Mammary epithelial cell (primary cell): ENCODE measurements at regions of chr10 and their contacts with region 1.

Region 1: GRCh38 chr10:125982260-125982948 is 86.0 kb downstream of the FANK1 start:
- DNase-seq: peak; percentile 52
- H3K4me3 ChIP-seq: no peak overlapping the region
- H3K27ac ChIP-seq: no peak overlapping the region
- H3K4me1 ChIP-seq: no peaks in the 10 kb centered on the region
- H3K27me3 ChIP-seq: no peaks in the 10 kb centered on the region
- CTCF ChIP-seq: peak; percentile 56 to 59

Region 2: GRCh38 chr10:125936331-125936730 is 46.1 kb before region 1 on chr10:
- CTCF ChIA-PET with region 1: no interaction called
- dilution Hi-C with region 1: no loop called
- in situ Hi-C with region 1: no loop called
- intact Hi-C with region 1: loop called (anchors 1 kb)
- DNase-seq: no peak
- H3K4me3 ChIP-seq: no peak overlapping the region
- H3K27ac ChIP-seq: no peak overlapping the region
- H3K4me1 ChIP-seq: peaks cover 7% of the 10 kb centered on the region
- H3K27me3 ChIP-seq: no peaks in the 10 kb centered on the region
- CTCF ChIP-seq: no peak

Region 3: DNA sequence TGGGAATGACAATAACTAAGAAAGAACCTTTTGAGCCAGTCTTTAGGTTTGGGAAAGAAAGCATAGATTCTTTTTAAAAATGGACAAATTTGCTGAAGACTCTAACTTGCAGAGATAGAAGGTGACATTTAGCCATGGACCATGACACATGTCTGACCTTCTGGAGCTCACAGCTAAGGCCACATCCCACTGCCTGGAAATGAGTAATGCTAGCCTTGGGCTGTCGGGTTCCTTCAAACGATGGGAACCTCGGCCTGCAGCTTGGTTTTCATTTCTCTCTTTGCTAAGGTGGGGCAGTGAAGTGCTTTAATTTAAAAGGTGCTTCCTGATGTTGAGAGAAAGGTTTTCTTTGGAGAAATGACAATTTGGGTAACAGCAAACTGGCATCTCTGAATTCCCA is 137.2 kb after region 1 on chr10:
- CTCF ChIA-PET with region 1: no interaction called
- dilution Hi-C with region 1: no loop called
- in situ Hi-C with region 1: no loop called
- intact Hi-C with region 1: no loop called
- DNase-seq: no peak
- H3K4me3 ChIP-seq: no peak overlapping the region
- H3K27ac ChIP-seq: no peak overlapping the region
- H3K4me1 ChIP-seq: no peaks in the 10 kb centered on the region
- H3K27me3 ChIP-seq: no peaks in the 10 kb centered on the region
- CTCF ChIP-seq: no peak

Region 4: GRCh38 chr10:126160971-126161659 is 178.7 kb after region 1 on chr10:
- CTCF ChIA-PET with region 1: no interaction called
- dilution Hi-C with region 1: no loop called
- in situ Hi-C with region 1: no loop called
- intact Hi-C with region 1: loop called (anchors 1 kb)
- DNase-seq: no peak
- H3K4me3 ChIP-seq: no peak overlapping the region
- H3K27ac ChIP-seq: no peak overlapping the region
- H3K4me1 ChIP-seq: no peaks in the 10 kb centered on the region
- H3K27me3 ChIP-seq: no peaks in the 10 kb centered on the region
- CTCF ChIP-seq: peak in 1 of 2 donors; percentile 36

Region 5: DNA sequence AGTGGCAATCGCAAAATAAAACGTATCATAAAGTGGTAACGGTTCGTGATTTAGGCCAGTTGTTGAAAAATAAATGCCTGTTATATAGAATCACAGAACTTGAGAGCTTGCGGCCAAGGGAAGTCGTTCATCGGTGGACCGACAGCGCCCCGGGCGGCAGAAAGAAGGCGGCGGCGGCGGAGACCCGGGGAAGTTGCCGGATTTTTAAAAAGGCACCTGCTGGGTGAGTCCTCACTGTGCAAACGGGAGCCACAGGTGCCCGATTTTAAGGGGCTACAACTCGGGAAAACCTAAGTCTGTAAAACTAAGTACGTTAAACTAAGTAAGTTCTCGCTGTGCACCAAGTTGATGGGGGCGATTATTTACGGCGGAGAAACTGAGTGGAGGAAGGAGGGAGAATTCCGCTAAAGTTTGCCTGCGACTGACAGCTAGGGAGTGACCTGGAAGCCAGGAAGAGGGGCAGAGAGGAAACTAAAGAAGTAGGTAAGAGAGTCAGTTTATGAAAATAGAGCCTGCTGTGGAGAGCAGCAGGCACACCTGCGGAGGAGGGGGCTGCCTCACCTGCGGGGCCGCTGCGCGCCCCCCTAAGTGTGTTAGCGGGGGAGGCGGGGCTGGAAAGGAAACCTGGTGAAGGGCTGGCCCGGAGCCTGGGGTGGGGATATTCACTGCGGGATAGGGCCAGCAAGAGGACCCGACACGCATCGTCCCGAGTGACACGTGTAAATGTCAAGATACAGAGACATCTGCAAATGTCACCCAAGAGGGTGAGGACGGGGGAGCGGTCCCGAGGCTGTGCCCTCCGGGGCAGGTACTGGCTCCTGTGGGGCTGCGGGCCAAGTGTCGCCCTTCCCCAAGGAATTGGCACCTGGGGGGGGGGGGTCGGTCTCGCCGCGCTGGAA is 404.9 kb after region 1 on chr10:
- CTCF ChIA-PET with region 1: no interaction called
- dilution Hi-C with region 1: no loop called
- in situ Hi-C with region 1: loop called (anchors 10 to 25 kb)
- intact Hi-C with region 1: loop called (anchors 1 kb)
- DNase-seq: peak; percentile 46
- H3K4me3 ChIP-seq: peak overlapping the region; percentile 13 to 56 (median 52)
- H3K27ac ChIP-seq: no peak overlapping the region
- H3K4me1 ChIP-seq: peaks cover 18% of the 10 kb centered on the region
- H3K27me3 ChIP-seq: no peaks in the 10 kb centered on the region
- CTCF ChIP-seq: peak; percentile 63 to 75

Region 6: DNA sequence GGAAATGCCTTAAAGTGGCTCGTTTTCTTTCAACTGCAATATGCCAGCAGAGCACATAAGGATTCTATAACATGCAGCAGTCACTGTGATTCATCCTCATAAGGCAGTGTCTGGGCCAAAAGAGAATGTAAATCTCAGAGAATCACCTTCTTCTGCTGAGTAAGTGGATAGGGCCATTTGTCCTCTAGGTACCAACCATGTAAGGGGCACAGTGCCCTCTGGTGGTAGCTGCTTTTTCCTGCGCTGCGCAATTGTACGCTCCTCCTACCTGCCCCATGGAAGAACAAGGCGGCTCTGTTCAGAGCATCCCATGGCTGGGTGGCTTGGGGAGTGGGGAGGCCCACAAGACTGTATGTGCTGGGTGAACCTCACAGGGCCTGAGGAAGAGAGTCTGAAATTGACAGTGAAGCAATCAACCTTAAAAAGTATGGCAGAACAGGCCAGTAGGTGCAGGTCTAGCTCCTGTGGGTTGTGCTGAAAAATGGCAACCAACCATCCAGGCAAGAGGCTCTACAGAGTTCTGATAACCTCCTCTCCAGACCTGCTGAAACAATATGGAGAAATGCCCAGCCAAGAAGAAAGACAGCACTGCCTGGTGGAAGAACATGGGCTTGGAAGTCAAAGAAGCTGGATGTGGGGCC is 766.7 kb after region 1 on chr10:
- CTCF ChIA-PET with region 1: no interaction called
- dilution Hi-C with region 1: no loop called
- in situ Hi-C with region 1: loop called in 1 of 2 experiments (anchors 25 kb)
- intact Hi-C with region 1: loop called (anchors 1 kb)
- DNase-seq: peak; percentile 51
- H3K4me3 ChIP-seq: no peak overlapping the region
- H3K27ac ChIP-seq: no peak overlapping the region
- H3K4me1 ChIP-seq: no peaks in the 10 kb centered on the region
- H3K27me3 ChIP-seq: no peaks in the 10 kb centered on the region
- CTCF ChIP-seq: peak; percentile 84 to 90